HepG2 (cell line): ENCODE measurements at regions of chr6 and their contacts with region 1.

Region 1: GRCh38 chr6:32796848-32797776 is 19.7 kb downstream of the HLA-DOB start:
- DNase-seq: peak; percentile 57
- ATAC-seq: peak; percentile 77
- H3K4me3 ChIP-seq: peak overlapping the region in 2 of 3 experiments; percentile 23 to 48; a peak in 3 of 6 replicates
- H3K27ac ChIP-seq: no peak overlapping the region
- H3K4me1 ChIP-seq: peaks cover 15% of the 10 kb centered on the region
- H3K27me3 ChIP-seq: peaks cover 0 to 40% of the 10 kb centered on the region in 2 experiments; a peak in 3 of 5 replicates
- CTCF ChIP-seq: peak; percentile 88
- EP300 ChIP-seq: no peak
- POLR2A ChIP-seq: no peak
- RAD21 ChIP-seq: peak; percentile 76

Region 2: DNA sequence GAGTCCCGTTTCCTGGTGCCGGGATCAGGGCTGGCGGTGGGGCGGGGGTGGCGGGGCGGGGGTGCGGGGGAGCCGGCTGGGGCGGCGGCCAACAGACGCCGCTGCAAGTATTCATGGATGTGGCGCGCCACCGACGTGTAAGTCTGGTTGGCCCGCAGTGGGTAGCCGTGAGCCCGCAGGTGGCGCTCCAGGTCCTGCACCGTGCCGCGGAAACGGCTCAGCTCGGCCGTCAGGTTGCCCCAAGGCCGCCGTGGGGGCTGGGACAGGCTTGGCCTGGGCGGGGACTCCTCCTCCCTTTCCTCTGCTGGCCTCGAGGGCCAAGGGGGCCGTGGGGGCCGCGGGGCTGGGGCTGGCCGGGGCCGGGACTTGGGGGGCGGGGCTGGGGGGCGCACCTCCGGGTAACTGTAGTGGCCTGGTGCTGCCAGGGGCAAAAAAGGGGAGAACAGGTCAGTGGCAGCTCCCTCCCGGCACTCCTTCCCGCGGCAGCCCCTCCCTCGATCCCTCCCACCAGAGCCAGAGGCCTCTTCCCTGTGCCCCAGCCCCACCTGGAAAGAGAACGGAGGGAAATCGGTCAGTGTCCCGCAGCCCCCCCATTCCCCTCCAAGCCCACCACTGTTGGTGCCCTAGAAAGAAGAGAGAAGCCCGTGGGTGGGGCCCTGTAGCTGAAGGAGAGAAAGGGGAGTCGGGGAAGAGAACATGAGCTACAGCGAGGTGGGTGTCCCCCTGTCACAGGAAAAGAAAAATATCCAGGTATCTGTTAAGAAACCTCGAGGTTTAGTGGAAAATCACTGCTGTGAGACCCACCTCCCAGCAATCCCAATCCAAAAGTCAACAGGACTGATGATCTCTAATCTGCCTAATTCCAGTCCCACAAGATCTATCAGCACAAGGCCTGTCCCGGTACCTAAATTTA is 709.3 kb before region 1 on chr6:
- CTCF ChIA-PET with region 1: no interaction called
- POLR2A ChIA-PET with region 1: no interaction called
- in situ Hi-C with region 1: loop called (anchors 25 kb)
- intact Hi-C with region 1: no loop called
- DNase-seq: peak; percentile 82
- ATAC-seq: peak; percentile 93
- H3K4me3 ChIP-seq: peak overlapping the region; percentile 37 to 62 (median 45); a peak in 4 of 6 replicates
- H3K27ac ChIP-seq: no peak overlapping the region
- H3K4me1 ChIP-seq: peaks cover 41% of the 10 kb centered on the region
- H3K27me3 ChIP-seq: peaks cover 4 to 31% of the 10 kb centered on the region in 2 experiments
- CTCF ChIP-seq: peak; percentile 93
- EP300 ChIP-seq: no peak
- POLR2A ChIP-seq: no peak
- RAD21 ChIP-seq: peak; percentile 96

Region 3: DNA sequence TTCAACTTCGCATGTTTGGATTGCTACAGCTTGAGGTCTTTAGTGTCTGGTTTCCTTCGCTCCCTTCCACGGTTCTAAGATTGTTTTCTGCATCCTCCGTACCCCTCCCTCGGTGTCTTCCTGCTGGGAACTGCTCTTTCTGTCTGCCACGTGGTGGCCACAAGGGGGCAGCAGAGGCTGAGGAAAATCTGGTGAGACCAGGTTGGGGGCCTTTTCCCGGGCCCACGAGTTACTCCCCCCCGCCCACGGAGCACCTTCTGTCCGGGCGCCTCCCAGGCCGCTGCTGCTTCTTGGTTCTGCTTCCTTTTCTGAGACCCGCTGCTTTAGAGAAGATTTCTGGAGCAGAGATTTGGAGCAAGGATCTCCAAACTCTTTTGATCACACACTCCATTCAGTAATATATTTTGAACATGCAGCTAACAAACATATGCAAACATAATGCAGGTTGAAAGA is 552.1 kb before region 1 on chr6:
- CTCF ChIA-PET with region 1: no interaction called
- POLR2A ChIA-PET with region 1: no interaction called
- in situ Hi-C with region 1: loop called (anchors 10 kb)
- intact Hi-C with region 1: loop called (anchors 10 kb)
- DNase-seq: peak; percentile 43
- ATAC-seq: peak; percentile 84
- H3K4me3 ChIP-seq: no peak overlapping the region; a peak in 1 of 6 replicates
- H3K27ac ChIP-seq: no peak overlapping the region
- H3K4me1 ChIP-seq: no peaks in the 10 kb centered on the region
- H3K27me3 ChIP-seq: peaks cover 0 to 23% of the 10 kb centered on the region in 2 experiments; a peak in 3 of 5 replicates
- CTCF ChIP-seq: peak; percentile 92
- EP300 ChIP-seq: no peak
- POLR2A ChIP-seq: no peak
- RAD21 ChIP-seq: peak; percentile 70